PC-9 (cell line): ENCODE measurements at regions of chr5 and their contacts with region 1.

Region 1: GRCh38 chr5:59562756-59563389 is 330.7 kb downstream of the PDE4D start:
- DNase-seq: peak; percentile 90 to 99
- H3K4me3 ChIP-seq: peak overlapping the region; percentile 15; the same call in 1 of the 2 replicates
- H3K27ac ChIP-seq: peak overlapping the region; percentile 83
- H3K4me1 ChIP-seq: peaks cover 47% of the 10 kb centered on the region
- H3K27me3 ChIP-seq: no peaks in the 10 kb centered on the region
- CTCF ChIP-seq: no peak

Region 2: DNA sequence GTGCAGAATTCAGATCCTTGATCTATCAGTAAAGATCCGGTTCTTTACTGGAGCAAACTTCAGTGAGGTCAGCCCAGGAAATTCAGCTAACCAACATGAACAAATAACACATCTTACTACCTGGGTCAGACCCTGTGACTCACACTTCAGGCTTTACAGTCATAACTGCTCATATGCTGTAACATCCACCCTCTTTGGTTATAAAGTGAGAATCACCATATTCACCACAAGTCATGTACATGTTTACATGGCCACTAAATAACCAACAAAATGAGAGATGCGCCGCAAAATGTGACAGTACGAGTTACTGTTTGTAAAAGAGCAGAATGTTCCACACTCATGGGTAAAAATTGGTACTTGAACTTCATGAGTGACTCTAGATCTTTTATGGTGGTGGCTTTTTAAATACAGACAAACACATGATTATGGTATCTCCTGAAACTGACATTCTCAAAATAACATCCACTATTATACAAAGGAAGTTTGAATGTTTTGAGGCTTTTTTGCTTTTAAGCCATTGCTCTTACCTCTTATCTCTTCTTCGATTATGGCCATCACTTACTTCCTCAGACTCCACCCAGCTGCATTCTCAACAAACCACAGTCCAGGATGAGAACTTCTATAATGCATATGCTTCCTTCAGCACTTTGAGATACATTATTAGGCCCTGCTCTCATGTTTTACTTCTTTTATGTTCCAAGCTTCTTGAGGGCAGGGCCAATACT is 463.4 kb before region 1 on chr5:
- CTCF ChIA-PET with region 1: no interaction called
- POLR2A ChIA-PET with region 1: no interaction called
- intact Hi-C with region 1: no loop called
- DNase-seq: peak; percentile 2 to 41
- H3K4me3 ChIP-seq: no peak overlapping the region
- H3K27ac ChIP-seq: no peak overlapping the region
- H3K4me1 ChIP-seq: no peaks in the 10 kb centered on the region; the same call in 1 of the 2 replicates
- H3K27me3 ChIP-seq: no peaks in the 10 kb centered on the region
- CTCF ChIP-seq: no peak

Region 3: GRCh38 chr5:59517926-59518585 is 44.8 kb before region 1 on chr5:
- CTCF ChIA-PET with region 1: no interaction called
- POLR2A ChIA-PET with region 1: no interaction called
- intact Hi-C with region 1: loop called (anchors 1 kb)
- DNase-seq: peak in 1 of 2 experiments; percentile 7
- H3K4me3 ChIP-seq: no peak overlapping the region
- H3K27ac ChIP-seq: peak overlapping the region; percentile 51
- H3K4me1 ChIP-seq: peaks cover 23% of the 10 kb centered on the region
- H3K27me3 ChIP-seq: no peaks in the 10 kb centered on the region
- CTCF ChIP-seq: no peak

Region 4: GRCh38 chr5:59786334-59786824 is 223.5 kb after region 1 on chr5:
- CTCF ChIA-PET with region 1: no interaction called
- POLR2A ChIA-PET with region 1: no interaction called
- intact Hi-C with region 1: loop called (anchors 1 kb)
- DNase-seq: peak; percentile 61 to 95
- H3K4me3 ChIP-seq: no peak overlapping the region
- H3K27ac ChIP-seq: peak overlapping the region; percentile 87
- H3K4me1 ChIP-seq: peaks cover 30% of the 10 kb centered on the region
- H3K27me3 ChIP-seq: no peaks in the 10 kb centered on the region
- CTCF ChIP-seq: no peak

Region 5: GRCh38 chr5:59887274-59887673 is 324.4 kb after region 1 on chr5:
- CTCF ChIA-PET with region 1: interaction called, 14 read pairs
- POLR2A ChIA-PET with region 1: no interaction called
- intact Hi-C with region 1: no loop called
- DNase-seq: no peak
- H3K4me3 ChIP-seq: no peak overlapping the region
- H3K27ac ChIP-seq: no peak overlapping the region
- H3K4me1 ChIP-seq: no peaks in the 10 kb centered on the region
- H3K27me3 ChIP-seq: no peaks in the 10 kb centered on the region
- CTCF ChIP-seq: no peak